ENCODE measurements at regions of chr7 and their contacts with region 1.

Region 1: GRCh38 chr7:123865517-123866117 is 20.6 kb downstream of the HYAL4 start:
- DNase-seq: peak in 3 of 5 donors; percentile 20 to 59 (median 25)
- H3K4me3 ChIP-seq: no peak overlapping the region
- H3K27ac ChIP-seq: no peak overlapping the region
- H3K4me1 ChIP-seq: no peaks in the 10 kb centered on the region
- H3K27me3 ChIP-seq: no peaks in the 10 kb centered on the region
- CTCF ChIP-seq: peak; percentile 32 to 82 (median 69)
- EP300 ChIP-seq: no peak
- POLR2A ChIP-seq: no peak

Region 2: GRCh38 chr7:123682690-123683089 is 182.9 kb before region 1 on chr7:
- intact Hi-C with region 1: loop called in 2 of 4 experiments (anchors 10 kb)
- DNase-seq: no peak
- H3K4me3 ChIP-seq: no peak overlapping the region
- H3K27ac ChIP-seq: no peak overlapping the region
- H3K4me1 ChIP-seq: no peaks in the 10 kb centered on the region
- H3K27me3 ChIP-seq: no peaks in the 10 kb centered on the region
- CTCF ChIP-seq: peak in 2 of 3 donors; percentile 32 to 39
- EP300 ChIP-seq: no peak
- POLR2A ChIP-seq: no peak

Region 3: DNA sequence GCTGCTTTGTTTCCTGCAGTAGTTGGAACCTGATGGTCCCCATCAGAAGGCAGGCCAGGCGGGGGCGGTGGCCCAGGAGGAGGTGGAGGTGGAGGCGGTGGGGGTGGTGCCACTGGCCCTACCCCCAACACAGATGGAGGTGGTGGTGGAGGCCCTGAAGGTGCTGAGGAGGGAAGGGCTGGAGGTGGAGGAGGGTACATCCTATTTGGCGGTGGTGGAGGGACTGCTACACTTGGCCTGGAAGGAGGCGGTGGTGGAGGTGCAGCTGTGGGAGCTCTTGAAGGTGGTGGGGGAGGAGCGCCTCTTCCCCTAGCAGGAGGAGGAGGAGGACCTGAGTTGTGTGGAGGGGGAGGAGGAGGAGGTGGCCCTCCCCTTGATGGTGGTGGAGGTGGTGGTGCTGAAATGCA is 173.1 kb before region 1 on chr7:
- intact Hi-C with region 1: loop called in 3 of 4 experiments (anchors 5 to 10 kb)
- DNase-seq: no peak
- H3K4me3 ChIP-seq: no peak overlapping the region
- H3K27ac ChIP-seq: no peak overlapping the region
- H3K4me1 ChIP-seq: no peaks in the 10 kb centered on the region
- H3K27me3 ChIP-seq: no peaks in the 10 kb centered on the region
- CTCF ChIP-seq: no peak
- EP300 ChIP-seq: no peak
- POLR2A ChIP-seq: no peak

Region 4: GRCh38 chr7:123797673-123798527 is 67.7 kb before region 1 on chr7:
- intact Hi-C with region 1: loop called in 2 of 4 experiments (anchors 5 to 10 kb)
- DNase-seq: no peak
- H3K4me3 ChIP-seq: no peak overlapping the region
- H3K27ac ChIP-seq: no peak overlapping the region
- H3K4me1 ChIP-seq: no peaks in the 10 kb centered on the region
- H3K27me3 ChIP-seq: no peaks in the 10 kb centered on the region
- CTCF ChIP-seq: peak in 2 of 3 donors; percentile 43 to 48
- EP300 ChIP-seq: no peak
- POLR2A ChIP-seq: no peak

Measured in ovary (tissue), 10 donors.